ENCODE measurements at regions of chr3 and their contacts with region 1.

Region 1: GRCh38 chr3:184380191-184380626 is 355 bp downstream of the CHRD start:
- DNase-seq: peak; percentile 79 to 88
- ATAC-seq: peak; percentile 61 to 73 (median 68)
- H3K4me3 ChIP-seq: peak overlapping the region; percentile 72
- H3K27ac ChIP-seq: peak overlapping the region; percentile 66
- H3K4me1 ChIP-seq: peaks cover 10% of the 10 kb centered on the region
- H3K27me3 ChIP-seq: peaks cover 0 to 32% (median 0%) of the 10 kb centered on the region in 3 donors
- CTCF ChIP-seq: no peak

Region 2: DNA sequence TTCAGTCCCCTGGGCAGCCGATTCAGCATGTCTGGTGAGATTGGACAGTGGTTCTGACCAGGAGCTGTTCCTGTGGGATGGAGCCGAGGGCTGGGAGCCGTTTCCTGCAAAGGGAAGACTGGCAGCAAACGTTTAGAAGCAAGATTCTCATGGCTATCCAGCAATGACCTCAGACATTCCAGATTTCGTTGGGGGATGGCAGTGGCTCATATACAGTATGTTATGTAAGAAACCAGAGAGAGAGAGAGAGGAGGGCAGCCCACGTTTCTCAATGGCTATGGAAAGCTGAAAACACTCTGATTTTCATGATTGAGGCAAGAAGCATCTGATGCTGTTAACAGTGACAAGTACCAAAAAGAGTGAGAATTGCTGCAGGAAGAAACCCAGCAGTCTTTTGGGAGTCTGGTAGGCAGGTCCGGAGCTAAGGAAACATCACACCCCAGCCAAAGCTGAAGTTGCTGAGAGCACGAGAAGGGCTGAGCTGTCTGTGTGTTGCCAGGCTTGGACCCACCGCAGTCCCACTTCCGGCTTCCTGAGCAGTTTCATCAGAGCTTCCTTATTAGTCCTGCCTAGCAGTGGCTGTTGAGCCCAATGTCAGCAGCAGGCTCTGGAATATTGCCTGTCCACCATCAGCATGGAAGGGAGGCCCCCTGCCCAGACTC is 406.2 kb after region 1 on chr3:
- intact Hi-C with region 1: loop called in 1 of 2 experiments (anchors 5 kb)
- DNase-seq: peak; percentile 55 to 73
- ATAC-seq: peak; percentile 50 to 82 (median 64)
- H3K4me3 ChIP-seq: peak overlapping the region; percentile 28
- H3K27ac ChIP-seq: peak overlapping the region; percentile 55
- H3K4me1 ChIP-seq: peaks cover 16% of the 10 kb centered on the region
- H3K27me3 ChIP-seq: peaks cover 0 to 4% (median 0%) of the 10 kb centered on the region in 3 donors
- CTCF ChIP-seq: no peak

Measured in psoas muscle (tissue), 8 donors.